Mammary epithelial cell (primary cell): ENCODE measurements at regions of chr5 and their contacts with region 1.

Region 1: DNA sequence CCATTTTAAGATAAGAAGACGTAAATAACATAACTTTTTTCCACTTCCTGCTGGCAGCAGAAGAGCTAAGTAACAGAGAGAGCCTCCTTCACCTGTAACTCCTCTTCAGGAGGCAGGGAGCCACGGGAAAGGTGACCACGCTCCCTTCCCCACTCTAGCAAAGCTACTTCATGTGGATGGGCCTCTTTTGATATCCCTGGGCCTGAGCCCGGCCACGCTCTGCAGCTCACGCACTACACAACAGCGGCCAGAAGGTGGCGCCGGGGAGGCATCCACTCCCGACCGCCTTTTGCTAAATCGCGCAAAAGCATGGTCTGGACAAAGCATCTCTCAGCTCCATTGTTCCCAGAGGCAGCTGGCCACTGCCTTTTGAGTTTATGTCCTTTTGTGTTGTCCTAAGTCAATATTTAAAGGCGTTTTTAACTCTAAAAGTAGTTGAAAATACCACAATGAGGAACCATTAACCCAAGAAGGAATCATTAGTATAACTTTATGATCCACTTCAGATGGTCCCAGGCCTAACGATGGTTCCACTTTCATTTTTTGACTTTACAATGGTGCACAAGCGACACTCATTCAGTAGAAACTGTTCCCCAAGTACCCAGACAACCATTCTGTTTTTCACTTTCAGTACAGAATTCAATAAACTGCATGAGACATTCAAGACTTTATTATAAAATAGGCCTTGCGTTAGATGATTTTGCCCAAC is 23.6 kb downstream of the CMBL start:
- DNase-seq: peak; percentile 59
- H3K4me3 ChIP-seq: no peak overlapping the region
- H3K27ac ChIP-seq: no peak overlapping the region
- H3K4me1 ChIP-seq: peaks cover 6% of the 10 kb centered on the region
- H3K27me3 ChIP-seq: no peaks in the 10 kb centered on the region
- CTCF ChIP-seq: peak; percentile 85 to 98

Region 2: DNA sequence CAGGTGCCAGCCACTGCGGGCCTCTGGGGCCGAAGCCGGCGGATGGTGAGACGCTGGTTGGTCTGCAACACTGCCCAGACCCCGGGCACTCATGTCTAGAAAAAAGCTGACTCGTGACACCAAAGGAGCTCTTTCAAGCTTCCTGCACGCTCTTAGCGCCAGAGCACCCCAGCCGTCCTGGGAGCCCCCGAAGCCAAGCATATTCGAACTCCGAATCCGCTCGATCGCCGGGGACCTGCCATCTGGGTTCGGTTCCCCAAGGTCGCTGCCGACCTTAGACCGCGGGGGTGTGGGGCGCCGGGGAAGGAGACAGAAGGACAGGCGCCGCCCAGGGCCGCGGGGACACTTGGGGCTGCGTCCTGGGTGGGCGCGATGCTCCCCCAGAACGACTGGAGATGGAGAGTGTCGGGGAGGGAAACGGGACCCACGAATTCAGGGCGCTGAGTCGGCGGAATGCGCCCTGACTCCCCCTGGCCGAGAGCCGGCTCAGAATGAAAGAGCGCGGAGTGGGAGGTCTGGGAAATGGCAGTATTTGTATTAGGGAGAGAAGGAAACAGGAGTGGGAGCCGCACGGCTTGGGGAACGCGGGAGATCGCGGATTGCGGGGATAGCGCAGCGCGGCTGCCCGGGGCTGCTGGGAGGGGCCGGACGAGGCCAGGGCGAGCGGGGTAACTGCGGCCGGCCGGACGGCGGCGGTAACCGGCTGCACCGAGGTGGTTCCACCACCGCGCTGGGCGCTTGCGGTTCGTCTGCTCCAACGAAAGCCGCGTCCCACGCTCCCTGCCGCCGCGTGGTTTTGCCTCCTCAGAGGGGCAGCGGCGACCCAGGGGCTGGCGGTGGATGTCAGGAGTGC is 49.3 kb after region 1 on chr5:
- CTCF ChIA-PET with region 1: no interaction called
- dilution Hi-C with region 1: no loop called
- in situ Hi-C with region 1: no loop called
- intact Hi-C with region 1: no loop called
- DNase-seq: no peak
- H3K4me3 ChIP-seq: peak overlapping the region; percentile 47 to 62 (median 61)
- H3K27ac ChIP-seq: no peak overlapping the region
- H3K4me1 ChIP-seq: peaks cover 25% of the 10 kb centered on the region
- H3K27me3 ChIP-seq: no peaks in the 10 kb centered on the region
- CTCF ChIP-seq: peak in 1 of 2 donors; percentile 20

Region 3: GRCh38 chr5:10353241-10354047 is 69.4 kb after region 1 on chr5 and contains the start of gene MARCHF6:
- CTCF ChIA-PET with region 1: no interaction called
- dilution Hi-C with region 1: no loop called
- in situ Hi-C with region 1: loop called in 1 of 2 experiments (anchors 5 kb)
- intact Hi-C with region 1: loop called (anchors 1 kb)
- DNase-seq: peak; percentile 98
- H3K4me3 ChIP-seq: peak within 1 kb of the TSS; percentile 85 to 99 (median 94)
- H3K27ac ChIP-seq: peak within 1 kb of the TSS; percentile 94
- H3K4me1 ChIP-seq: peaks cover 25% of the 10 kb centered on the region
- H3K27me3 ChIP-seq: no peaks in the 10 kb centered on the region
- CTCF ChIP-seq: no peak
- total RNA-seq, gene MARCHF6: 91.0 to 110 TPM

Region 4: GRCh38 chr5:10364186-10364683 is 80.2 kb after region 1 on chr5:
- CTCF ChIA-PET with region 1: interaction called, 16 read pairs
- dilution Hi-C with region 1: no loop called
- in situ Hi-C with region 1: no loop called
- intact Hi-C with region 1: loop called (anchors 1 kb)
- DNase-seq: peak; percentile 41
- H3K4me3 ChIP-seq: no peak overlapping the region
- H3K27ac ChIP-seq: no peak overlapping the region
- H3K4me1 ChIP-seq: peaks cover 19% of the 10 kb centered on the region
- H3K27me3 ChIP-seq: no peaks in the 10 kb centered on the region
- CTCF ChIP-seq: peak; percentile 49 to 63

Region 5: GRCh38 chr5:10374046-10375022 is 90.3 kb after region 1 on chr5:
- CTCF ChIA-PET with region 1: no interaction called
- dilution Hi-C with region 1: no loop called
- in situ Hi-C with region 1: loop called in 1 of 2 experiments (anchors 5 kb)
- intact Hi-C with region 1: no loop called
- DNase-seq: no peak
- H3K4me3 ChIP-seq: no peak overlapping the region
- H3K27ac ChIP-seq: no peak overlapping the region
- H3K4me1 ChIP-seq: peaks cover 3% of the 10 kb centered on the region
- H3K27me3 ChIP-seq: no peaks in the 10 kb centered on the region
- CTCF ChIP-seq: no peak

Region 6: GRCh38 chr5:10424124-10424731 is 140.1 kb after region 1 on chr5:
- CTCF ChIA-PET with region 1: no interaction called
- dilution Hi-C with region 1: no loop called
- in situ Hi-C with region 1: no loop called
- intact Hi-C with region 1: loop called (anchors 1 kb)
- DNase-seq: no peak
- H3K4me3 ChIP-seq: no peak overlapping the region
- H3K27ac ChIP-seq: no peak overlapping the region
- H3K4me1 ChIP-seq: no peaks in the 10 kb centered on the region
- H3K27me3 ChIP-seq: no peaks in the 10 kb centered on the region
- CTCF ChIP-seq: peak; percentile 35 to 49